AG04449 (cell line): ENCODE measurements at regions of chr3 and their contacts with region 1.

Region 1: GRCh38 chr3:11288786-11289682 is 16.8 kb downstream of the ATG7 start:
- DNase-seq: peak; percentile 78
- H3K4me3 ChIP-seq: peak overlapping the region; percentile 26; the same call in 1 of the 2 replicates
- CTCF ChIP-seq: no peak

Region 2: DNA sequence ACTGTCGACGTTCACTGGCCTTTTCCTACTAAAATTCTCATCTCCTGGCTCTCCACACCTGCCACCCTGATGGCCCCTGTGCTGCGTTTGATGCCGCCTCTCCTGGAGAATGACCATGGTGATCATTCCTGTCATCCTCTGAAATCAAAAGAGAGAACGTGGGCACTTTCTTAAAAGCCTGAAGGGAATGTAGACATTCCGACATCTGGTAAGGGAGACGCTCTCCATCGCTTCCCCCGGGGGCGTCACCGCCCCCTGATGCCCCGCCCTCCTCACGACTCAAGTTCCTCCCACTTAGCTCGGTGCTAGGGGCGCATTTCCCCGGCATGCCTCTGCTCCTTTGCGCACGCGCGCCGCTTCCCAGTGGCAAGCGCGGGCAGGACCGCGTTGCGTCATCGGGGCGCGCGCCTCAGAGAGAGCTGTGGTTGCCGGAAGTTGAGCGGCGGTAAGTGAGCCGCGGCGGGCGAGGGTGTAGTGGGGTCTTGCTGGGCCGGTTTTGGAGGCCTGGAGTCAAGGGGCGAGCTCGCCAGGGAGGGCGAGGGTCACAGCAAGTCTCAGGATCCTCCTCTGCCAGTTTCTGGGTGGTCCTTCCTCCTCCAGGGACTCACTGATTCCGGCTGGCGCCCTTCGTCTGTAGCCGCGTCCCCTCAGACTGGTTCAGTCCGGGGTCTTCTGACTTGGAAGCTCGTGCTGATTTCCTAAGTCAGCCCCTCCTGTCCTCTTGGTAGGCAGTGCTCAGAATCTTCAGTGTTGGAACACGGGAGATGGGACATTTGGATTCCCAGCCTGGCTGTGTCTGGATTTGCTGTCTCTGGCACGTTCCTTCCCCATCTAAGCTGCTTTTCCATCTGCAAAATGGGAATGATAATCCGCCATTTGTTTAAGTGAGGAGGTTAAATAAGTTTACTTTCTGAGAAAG is 16.8 kb before region 1 on chr3 and contains the start of gene ATG7:
- CTCF ChIA-PET with region 1: interaction called, 8 read pairs
- POLR2A ChIA-PET with region 1: interaction called, 13 read pairs
- DNase-seq: peak; percentile 65
- H3K4me3 ChIP-seq: peak within 1 kb of the TSS; percentile 98
- CTCF ChIP-seq: peak; percentile 18